Activated B cell treated with CpG ODN at 0.5 μM for 24 hours (primary cell): ENCODE measurements at regions of chr16 and their contacts with region 1.

Region 1: DNA sequence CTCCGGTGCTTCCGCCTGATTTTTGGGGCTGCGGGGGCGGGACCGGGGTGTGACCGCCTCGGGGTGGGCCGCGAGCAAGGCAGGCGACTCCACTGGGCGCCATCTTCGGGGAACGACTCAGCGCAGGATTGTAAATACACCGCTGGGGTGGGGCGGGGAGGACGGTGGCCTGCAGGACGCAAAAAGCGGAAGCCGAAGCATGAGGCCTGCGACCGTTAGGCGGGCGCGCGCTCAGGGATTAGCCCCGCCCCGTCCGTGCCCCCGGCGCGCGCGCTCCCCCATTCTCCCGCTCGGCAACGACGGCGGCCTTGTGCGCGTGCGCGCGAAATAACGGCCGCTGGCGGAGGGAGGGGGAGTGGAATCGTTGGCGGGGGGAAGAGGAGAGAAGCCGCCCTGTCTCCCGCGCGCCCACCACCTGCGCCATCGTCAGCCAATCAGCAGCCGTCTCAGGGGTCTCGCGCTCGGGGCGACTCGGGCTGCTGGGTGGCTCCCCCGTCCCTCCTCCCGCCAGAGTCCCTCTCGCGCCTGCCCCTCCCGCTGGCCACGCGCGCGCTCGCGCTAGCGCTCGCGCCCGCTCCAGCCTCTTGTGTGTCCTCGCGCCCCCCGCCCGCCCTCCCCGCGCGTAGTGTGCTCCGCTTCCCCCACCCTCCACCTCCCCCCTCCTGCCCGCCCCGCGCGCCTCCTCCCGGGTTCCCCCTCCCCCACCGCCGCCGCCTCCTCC is 791 bp upstream of the MAZ start:
- DNase-seq: peak; percentile 96
- ATAC-seq: peak; percentile 70
- H3K4me3 Mint-ChIP-seq: peak overlapping the region; percentile 100
- H3K27ac Mint-ChIP-seq: peak overlapping the region; percentile 100
- H3K4me1 Mint-ChIP-seq: peaks cover 45% of the 10 kb centered on the region
- H3K27me3 Mint-ChIP-seq: no peaks in the 10 kb centered on the region
- CTCF ChIP-seq: no peak

Region 2: DNA sequence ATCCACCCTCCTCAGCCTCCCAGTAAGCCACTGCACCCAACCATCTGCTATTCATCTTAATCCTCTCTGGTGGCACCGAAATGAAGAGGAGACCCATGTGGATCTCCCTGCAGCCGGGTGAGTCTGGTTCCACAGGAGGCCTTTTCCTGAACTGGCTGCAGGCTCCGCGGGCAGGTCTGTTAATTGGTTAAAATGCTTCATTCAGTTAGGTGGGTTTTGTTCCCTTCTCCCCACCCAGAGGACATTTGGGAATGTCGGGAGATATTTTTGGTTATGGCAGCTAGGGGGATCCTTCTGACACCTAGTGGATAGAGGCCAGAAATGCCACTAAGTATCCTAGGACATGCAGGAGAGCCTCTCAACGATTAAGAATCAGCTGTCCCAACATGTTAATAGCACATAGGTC is 76.4 kb before region 1 on chr16:
- CTCF ChIA-PET with region 1: no interaction called
- POLR2A ChIA-PET with region 1: interaction called, 10 read pairs
- intact Hi-C with region 1: no loop called
- DNase-seq: no peak
- ATAC-seq: no peak
- H3K4me3 Mint-ChIP-seq: no peak overlapping the region
- H3K27ac Mint-ChIP-seq: no peak overlapping the region
- H3K4me1 Mint-ChIP-seq: peaks cover 27% of the 10 kb centered on the region
- H3K27me3 Mint-ChIP-seq: no peaks in the 10 kb centered on the region
- CTCF ChIP-seq: no peak

Region 3: GRCh38 chr16:29831490-29831889 is 26.0 kb after region 1 on chr16:
- CTCF ChIA-PET with region 1: no interaction called
- POLR2A ChIA-PET with region 1: no interaction called
- intact Hi-C with region 1: no loop called
- DNase-seq: no peak
- ATAC-seq: no peak
- H3K4me3 Mint-ChIP-seq: no peak overlapping the region
- H3K27ac Mint-ChIP-seq: no peak overlapping the region
- H3K4me1 Mint-ChIP-seq: no peaks in the 10 kb centered on the region
- H3K27me3 Mint-ChIP-seq: no peaks in the 10 kb centered on the region
- CTCF ChIP-seq: no peak

Region 4: DNA sequence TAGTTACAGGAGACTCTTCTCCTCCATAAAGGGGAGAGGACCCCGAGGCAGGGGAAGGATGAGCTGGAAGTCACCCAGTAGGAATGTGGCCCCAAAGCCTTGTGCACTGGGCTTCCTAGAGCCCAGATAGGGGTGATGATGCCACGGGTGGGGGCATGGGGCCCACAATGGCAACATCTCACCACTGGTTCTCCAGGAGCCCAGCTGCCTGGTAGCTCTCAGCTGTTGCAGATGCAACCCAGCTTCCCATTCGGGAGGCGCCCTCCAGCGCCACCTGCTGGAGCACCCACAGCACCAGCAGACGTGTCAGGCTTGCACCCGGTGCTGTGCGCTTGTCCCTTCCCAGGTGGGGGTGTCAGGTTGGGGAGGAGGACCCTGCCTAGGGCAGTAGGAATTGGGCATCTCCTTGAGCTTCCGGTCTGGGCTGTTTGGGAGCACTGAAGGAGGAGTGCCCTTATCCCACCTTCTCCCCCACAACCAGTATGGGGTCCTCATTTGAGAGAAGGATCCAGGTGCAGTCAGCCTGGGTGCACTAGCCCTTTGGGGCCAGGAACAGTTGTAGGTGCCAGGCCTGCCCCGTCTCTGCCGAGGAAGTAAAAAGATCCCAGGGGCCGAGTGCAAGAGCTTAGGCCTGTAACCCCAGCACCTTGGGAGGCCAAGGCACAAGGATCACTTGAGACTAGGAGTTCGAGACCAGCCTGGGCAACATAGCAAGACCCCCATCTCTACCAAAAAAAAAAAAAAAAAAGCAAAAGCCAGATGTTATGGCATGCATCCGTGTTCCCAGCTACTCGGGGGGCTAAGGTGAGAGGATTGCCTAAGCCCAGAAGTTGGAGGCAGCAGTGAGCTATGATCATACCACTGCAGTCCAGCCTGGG is 43.1 kb after region 1 on chr16:
- CTCF ChIA-PET with region 1: interaction called, 43 read pairs
- POLR2A ChIA-PET with region 1: interaction called, 14 read pairs
- intact Hi-C with region 1: loop called (anchors 1 kb)
- DNase-seq: peak; percentile 60
- ATAC-seq: peak; percentile 82
- H3K4me3 Mint-ChIP-seq: no peak overlapping the region
- H3K27ac Mint-ChIP-seq: no peak overlapping the region
- H3K4me1 Mint-ChIP-seq: no peaks in the 10 kb centered on the region
- H3K27me3 Mint-ChIP-seq: no peaks in the 10 kb centered on the region
- CTCF ChIP-seq: peak; percentile 52

Region 5: GRCh38 chr16:29900102-29900887 is 94.8 kb after region 1 on chr16 and contains the start of gene ASPHD1:
- CTCF ChIA-PET with region 1: no interaction called
- POLR2A ChIA-PET with region 1: interaction called, 10 read pairs
- intact Hi-C with region 1: no loop called
- DNase-seq: no peak
- ATAC-seq: peak; percentile 90
- H3K4me3 Mint-ChIP-seq: peak within 1 kb of the TSS; percentile 77
- H3K27ac Mint-ChIP-seq: no peak within 1 kb of the TSS
- H3K4me1 Mint-ChIP-seq: peaks cover 5% of the 10 kb centered on the region
- H3K27me3 Mint-ChIP-seq: peaks cover 33% of the 10 kb centered on the region
- CTCF ChIP-seq: no peak
- total RNA-seq, gene ASPHD1: 0.12 TPM in 1 of 2 replicates, not detected in the other

Region 6: DNA sequence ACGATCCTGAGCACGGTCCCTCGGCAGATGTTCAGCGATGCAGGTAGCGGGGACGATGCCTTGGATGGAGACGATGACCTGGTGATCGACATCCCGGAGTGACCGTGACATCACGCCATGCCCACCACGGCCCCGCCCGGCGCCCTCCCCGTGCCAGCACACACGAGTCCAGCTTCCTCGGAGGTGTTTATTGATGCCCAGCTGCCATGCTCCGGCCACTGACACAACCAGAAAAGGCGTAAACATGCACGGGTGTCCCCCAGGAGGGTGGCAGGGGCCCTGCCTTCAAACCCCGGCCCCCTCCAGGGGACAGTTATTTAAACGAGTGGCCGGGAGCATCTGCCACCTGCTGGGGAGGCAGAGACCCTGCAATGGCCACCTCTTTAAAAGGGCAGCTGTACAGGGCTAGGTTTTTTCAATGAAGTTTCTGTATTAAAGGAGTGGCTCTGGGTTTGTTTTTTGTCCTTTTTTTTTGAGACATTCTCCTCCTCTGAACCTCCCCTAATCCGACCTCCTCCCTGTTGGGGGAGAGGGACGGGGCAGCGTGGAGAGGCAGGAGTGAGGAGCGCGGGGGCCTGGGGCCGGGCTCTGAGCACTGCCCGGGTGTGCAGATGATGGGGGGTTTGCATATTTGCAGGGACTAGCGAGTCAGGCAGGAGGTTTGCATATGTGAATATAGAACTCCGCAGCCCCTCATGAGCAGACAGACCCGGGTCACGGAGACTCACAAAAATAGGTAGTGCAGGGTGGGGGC is 200.0 kb after region 1 on chr16:
- CTCF ChIA-PET with region 1: interaction called, 5 read pairs
- POLR2A ChIA-PET with region 1: interaction called, 8 read pairs
- intact Hi-C with region 1: loop called (anchors 1 kb)
- DNase-seq: peak; percentile 31
- ATAC-seq: peak; percentile 81
- H3K4me3 Mint-ChIP-seq: no peak overlapping the region
- H3K27ac Mint-ChIP-seq: no peak overlapping the region
- H3K4me1 Mint-ChIP-seq: peaks cover 10% of the 10 kb centered on the region
- H3K27me3 Mint-ChIP-seq: peaks cover 11% of the 10 kb centered on the region
- CTCF ChIP-seq: peak; percentile 30

Region 7: DNA sequence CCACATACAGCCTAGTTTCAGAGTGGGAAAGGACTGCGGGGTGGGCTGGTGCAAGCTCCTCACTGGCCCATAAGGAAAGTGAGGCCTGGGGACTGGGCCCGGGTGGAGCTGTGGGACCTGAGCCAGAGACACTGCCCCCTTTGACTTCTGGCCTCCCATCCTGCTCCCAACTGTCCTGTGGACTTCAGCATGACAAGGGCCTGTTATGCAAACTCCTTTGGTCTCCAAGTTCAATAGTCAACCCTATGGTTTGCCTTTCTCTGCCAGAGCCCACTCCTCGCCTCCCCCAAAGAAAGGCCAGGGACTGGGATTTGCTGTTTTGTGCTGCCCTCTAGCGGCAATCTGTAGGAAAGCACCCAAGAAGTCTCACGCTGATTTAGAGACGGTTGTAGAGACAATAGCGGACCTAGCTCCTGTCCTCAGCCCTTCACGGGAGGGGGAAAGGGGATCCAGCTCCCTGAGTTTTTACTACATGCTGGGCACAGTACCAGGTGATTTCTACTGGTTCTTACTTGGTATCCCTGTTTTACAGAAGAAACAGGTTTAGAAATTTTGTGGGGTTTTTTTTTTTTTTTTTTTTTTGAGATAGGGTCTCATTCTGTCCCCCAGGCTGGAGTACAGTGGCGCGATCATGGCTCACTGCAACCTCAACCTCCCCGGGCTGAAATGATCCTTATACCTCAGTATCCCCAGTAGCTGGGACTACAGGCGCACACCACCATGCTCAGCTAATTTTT is 226.7 kb after region 1 on chr16:
- CTCF ChIA-PET with region 1: no interaction called
- POLR2A ChIA-PET with region 1: no interaction called
- intact Hi-C with region 1: loop called (anchors 1 kb)
- DNase-seq: no peak
- ATAC-seq: peak; percentile 75
- H3K4me3 Mint-ChIP-seq: no peak overlapping the region
- H3K27ac Mint-ChIP-seq: no peak overlapping the region
- H3K4me1 Mint-ChIP-seq: peaks cover 8% of the 10 kb centered on the region
- H3K27me3 Mint-ChIP-seq: peaks cover 54% of the 10 kb centered on the region
- CTCF ChIP-seq: peak; percentile 26

Region 8: DNA sequence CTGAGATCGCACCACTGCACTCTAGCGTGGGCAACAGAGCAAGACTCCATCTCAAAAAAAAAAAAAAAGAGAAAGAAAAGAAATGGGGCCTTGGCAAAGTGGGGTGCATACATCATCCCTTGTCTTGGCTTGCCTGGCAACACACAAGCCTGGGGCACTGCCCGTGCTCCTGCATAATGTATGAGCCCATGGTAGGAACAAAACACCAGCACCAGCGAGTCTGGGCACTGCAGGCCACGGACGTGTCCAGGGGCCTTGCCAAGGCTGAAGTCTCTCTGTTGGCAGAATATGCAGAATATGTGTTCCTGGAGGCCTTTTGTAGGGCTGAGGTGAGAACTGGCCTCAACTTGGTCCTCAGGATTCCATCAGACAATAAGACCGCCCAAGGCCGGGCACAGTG is 244.3 kb after region 1 on chr16:
- CTCF ChIA-PET with region 1: no interaction called
- POLR2A ChIA-PET with region 1: no interaction called
- intact Hi-C with region 1: no loop called
- DNase-seq: no peak
- ATAC-seq: no peak
- H3K4me3 Mint-ChIP-seq: no peak overlapping the region
- H3K27ac Mint-ChIP-seq: no peak overlapping the region
- H3K4me1 Mint-ChIP-seq: peaks cover 9% of the 10 kb centered on the region
- H3K27me3 Mint-ChIP-seq: no peaks in the 10 kb centered on the region
- CTCF ChIP-seq: no peak